Activated T-helper 1 cell treated with anti-CD3 and anti-CD28 coated beads, Interleukin-12 subunit alpha, Interleukin-12 subunit beta, Interleukin-2, Interleukin-4 antibody, amounts not matched to agents 30 ng/mL and 10 ng/mL and 1 ng/mL, durations not matched to agents 14 hours and 24 hours and 36 hours (primary cell): ENCODE measurements at regions of chr1 and their contacts with region 1.

Region 1: GRCh38 chr1:27489910-27490741 is at the start of gene WASF2:
- DNase-seq: peak; percentile 96
- H3K4me3 Mint-ChIP-seq: peak within 1 kb of the TSS; percentile 96
- H3K27ac Mint-ChIP-seq: peak within 1 kb of the TSS; percentile 98
- H3K4me1 Mint-ChIP-seq: peaks cover 28% of the 10 kb centered on the region
- H3K27me3 Mint-ChIP-seq: no peaks in the 10 kb centered on the region
- total RNA-seq, gene WASF2: 108 and 109 TPM in 2 replicates

Region 2: DNA sequence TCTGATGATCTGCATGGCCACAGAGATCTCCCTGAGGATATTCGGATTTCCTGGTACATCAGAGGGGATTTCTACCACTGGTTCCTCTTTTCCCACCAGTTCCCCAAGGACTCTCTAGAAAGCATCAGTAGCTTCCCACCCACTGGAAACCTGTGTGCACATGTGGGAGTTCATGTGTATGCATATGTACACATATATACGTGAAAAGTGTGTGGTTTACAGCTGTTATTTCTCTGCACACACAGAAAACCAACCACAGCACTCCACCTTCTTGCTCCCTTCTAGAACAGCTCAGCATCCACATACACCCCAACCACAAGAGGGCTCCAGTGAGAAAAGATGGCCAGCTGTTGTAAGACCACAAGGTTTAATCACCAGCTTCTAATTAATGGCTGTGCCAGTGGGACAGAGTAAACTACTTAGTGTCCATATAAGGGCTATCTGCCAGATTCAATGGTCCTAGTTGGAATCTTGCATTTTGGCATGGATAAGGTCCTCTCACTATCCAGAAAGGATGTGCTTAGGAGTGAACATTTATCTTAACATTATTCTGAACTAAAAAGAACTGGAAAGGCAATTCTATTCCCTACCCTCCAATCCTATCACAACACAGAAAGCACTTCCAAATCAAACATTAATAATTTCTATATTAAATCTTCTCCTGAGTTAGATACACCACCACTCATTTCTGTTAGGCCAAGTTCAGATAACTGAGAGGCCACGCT is 73.6 kb before region 1 on chr1:
- intact Hi-C with region 1: loop called (anchors 1 kb)
- DNase-seq: peak; percentile 44
- H3K4me3 Mint-ChIP-seq: no peak overlapping the region
- H3K27ac Mint-ChIP-seq: no peak overlapping the region
- H3K4me1 Mint-ChIP-seq: peaks cover 47% of the 10 kb centered on the region
- H3K27me3 Mint-ChIP-seq: no peaks in the 10 kb centered on the region

Region 3: DNA sequence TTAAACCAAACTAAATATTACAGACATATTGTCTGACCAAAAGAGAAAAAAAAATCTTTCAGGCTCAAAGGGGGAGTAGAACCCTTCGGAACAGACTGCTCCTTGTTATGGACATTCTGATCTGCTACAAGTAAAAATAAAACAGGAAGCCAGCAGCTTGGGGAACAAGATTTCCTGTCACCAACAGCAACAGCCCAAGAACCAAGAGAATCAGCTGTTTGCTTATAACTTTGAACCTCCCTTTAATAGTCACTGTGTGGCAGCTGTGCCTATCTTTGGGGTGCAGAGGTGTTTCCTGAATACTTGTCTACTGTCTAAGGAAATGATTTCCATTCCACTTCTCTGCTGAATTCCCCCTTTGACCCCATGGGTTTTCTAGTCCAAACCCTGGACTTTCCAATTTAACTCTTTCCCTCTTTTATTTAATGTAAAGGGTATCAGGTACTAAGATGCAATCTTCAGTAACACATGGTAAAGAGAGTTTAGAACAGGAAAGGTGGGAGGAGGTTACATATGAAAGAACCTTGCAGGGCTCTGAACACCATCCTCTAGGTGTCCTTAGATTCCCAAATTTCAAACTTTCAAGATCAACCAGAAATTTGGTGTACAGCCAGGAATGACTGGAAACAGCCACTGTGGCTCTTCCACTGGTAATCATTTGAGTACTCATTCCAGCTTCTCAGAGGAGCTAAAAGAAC is 59.1 kb before region 1 on chr1:
- intact Hi-C with region 1: loop called (anchors 1 kb)
- DNase-seq: peak; percentile 29
- H3K4me3 Mint-ChIP-seq: peak overlapping the region; percentile 59
- H3K27ac Mint-ChIP-seq: peak overlapping the region; percentile 75
- H3K4me1 Mint-ChIP-seq: peaks cover 70% of the 10 kb centered on the region
- H3K27me3 Mint-ChIP-seq: no peaks in the 10 kb centered on the region

Region 4: DNA sequence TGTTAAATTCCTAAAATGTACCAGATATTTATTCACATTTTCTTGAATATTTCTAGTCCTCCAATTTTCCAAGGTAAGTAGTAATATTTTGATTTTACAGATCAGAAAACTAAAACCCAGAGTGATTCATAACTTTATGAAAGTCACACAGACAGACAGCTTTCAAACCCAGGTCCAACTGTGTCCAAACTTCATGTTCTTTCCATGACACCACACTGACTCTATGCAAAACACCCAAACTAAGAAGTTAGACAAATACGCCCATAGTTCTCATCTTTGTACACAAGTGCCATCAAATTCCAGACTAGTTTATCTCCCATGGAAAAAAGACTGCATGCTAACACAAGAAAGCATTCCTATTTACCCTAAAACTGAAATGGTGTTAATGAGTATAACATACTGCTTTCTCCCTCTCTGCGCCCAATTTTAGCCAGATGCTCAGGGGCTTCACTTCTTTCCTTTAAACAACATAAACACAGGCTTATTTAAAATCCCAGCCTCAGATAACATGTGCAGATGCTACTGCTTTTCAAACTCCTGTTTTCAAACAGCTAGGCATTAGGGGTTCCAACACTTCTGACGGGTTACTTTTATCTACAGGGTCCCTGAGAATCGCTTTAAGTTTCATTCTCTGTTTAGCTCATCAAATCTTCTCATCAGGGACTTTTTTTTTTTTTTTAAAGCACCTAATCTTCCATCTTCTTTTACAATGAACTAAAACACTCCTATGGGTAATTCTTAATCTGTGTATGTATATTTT is 44.8 kb before region 1 on chr1:
- intact Hi-C with region 1: loop called (anchors 1 kb)
- DNase-seq: no peak
- H3K4me3 Mint-ChIP-seq: peak overlapping the region; percentile 73
- H3K27ac Mint-ChIP-seq: peak overlapping the region; percentile 96
- H3K4me1 Mint-ChIP-seq: peaks cover 37% of the 10 kb centered on the region
- H3K27me3 Mint-ChIP-seq: no peaks in the 10 kb centered on the region

Region 5: GRCh38 chr1:27522432-27523351 is 32.6 kb after region 1 on chr1:
- intact Hi-C with region 1: loop called (anchors 1 kb)
- DNase-seq: peak; percentile 59
- H3K4me3 Mint-ChIP-seq: peak overlapping the region; percentile 90
- H3K27ac Mint-ChIP-seq: peak overlapping the region; percentile 97
- H3K4me1 Mint-ChIP-seq: peaks cover 79% of the 10 kb centered on the region
- H3K27me3 Mint-ChIP-seq: no peaks in the 10 kb centered on the region

Region 6: GRCh38 chr1:27671964-27672749 is 182.0 kb after region 1 on chr1 and contains the start of gene IFI6:
- intact Hi-C with region 1: loop called (anchors 2 kb)
- DNase-seq: peak; percentile 84
- H3K4me3 Mint-ChIP-seq: peak within 1 kb of the TSS; percentile 94
- H3K27ac Mint-ChIP-seq: peak within 1 kb of the TSS; percentile 90
- H3K4me1 Mint-ChIP-seq: peaks cover 40% of the 10 kb centered on the region
- H3K27me3 Mint-ChIP-seq: no peaks in the 10 kb centered on the region
- total RNA-seq, gene IFI6: 71.7 and 85.6 TPM in 2 replicates

Region 7: DNA sequence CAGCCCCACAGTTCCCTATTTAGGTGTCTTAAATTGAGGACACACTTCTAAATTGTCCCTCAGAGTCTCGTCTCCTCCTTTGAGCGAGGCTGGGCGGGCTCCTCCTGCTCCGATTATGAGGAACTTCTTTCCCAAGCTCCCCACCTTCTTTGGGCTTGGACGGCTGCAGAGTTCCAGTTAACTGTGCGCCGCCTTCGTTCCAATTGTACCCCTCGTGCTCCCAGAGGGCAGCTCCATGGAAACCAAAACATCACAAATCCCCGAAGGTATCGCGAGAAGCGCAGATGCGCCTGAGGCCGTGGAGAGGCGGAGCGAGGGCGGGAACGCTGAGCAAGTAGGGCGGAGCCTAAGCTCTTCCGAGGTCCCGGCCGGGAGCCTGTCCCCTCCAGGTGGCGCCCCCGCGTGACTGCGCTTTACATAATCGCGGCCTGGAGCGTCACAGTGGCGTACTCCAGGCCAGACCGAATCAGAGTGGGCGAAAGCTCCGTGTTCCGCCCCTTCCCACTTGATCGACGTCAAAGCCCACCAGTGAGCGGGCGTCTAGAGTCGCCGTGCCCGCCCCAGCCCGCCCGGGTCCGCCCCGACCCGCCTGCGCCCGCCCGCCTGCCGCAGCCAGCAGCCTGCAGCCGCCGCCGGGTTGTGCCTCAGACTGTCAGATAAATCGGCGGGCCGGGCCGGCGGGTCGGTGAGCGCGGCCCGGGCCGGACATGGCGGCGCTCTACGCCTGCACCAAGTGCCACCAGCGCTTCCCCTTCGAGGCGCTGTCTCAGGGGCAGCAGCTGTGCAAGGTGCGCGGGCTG is 235.4 kb after region 1 on chr1 and contains the start of gene FAM76A:
- intact Hi-C with region 1: loop called (anchors 1 kb)
- DNase-seq: peak; percentile 99
- H3K4me3 Mint-ChIP-seq: peak within 1 kb of the TSS; percentile 86
- H3K27ac Mint-ChIP-seq: peak within 1 kb of the TSS; percentile 97
- H3K4me1 Mint-ChIP-seq: peaks cover 29% of the 10 kb centered on the region
- H3K27me3 Mint-ChIP-seq: no peaks in the 10 kb centered on the region
- total RNA-seq, gene FAM76A: 9.9 and 13.1 TPM in 2 replicates